Right ventricle myocardium superior (tissue), 1 donor: ENCODE measurements at regions of chr2 and their contacts with region 1.

Region 1: GRCh38 chr2:147485210-147485851 is 359.5 kb upstream of the ACVR2A start:
- DNase-seq: no peak
- ATAC-seq: no peak

Region 2: GRCh38 chr2:147499785-147500184 is 14.5 kb after region 1 on chr2:
- intact Hi-C with region 1: loop called (anchors 2 kb)
- DNase-seq: no peak
- ATAC-seq: no peak

Region 3: GRCh38 chr2:147603447-147603846 is 118.1 kb after region 1 on chr2:
- intact Hi-C with region 1: no loop called
- DNase-seq: no peak
- ATAC-seq: no peak

Region 4: GRCh38 chr2:148172131-148172753 is 686.9 kb after region 1 on chr2:
- intact Hi-C with region 1: no loop called
- DNase-seq: no peak
- ATAC-seq: no peak